HEK293 (cell line): ENCODE measurements at regions of chr21 and their contacts with region 1.

Region 1: GRCh38 chr21:33479679-33480480 is at the start of gene TMEM50B:
- H3K4me3 ChIP-seq: peak within 1 kb of the TSS; percentile 59
- H3K27ac ChIP-seq: peak within 1 kb of the TSS; percentile 87
- H3K4me1 ChIP-seq: peaks cover 2% of the 10 kb centered on the region; the same call in 1 of the 2 replicates
- CTCF ChIP-seq: peak; percentile 98

Region 2: DNA sequence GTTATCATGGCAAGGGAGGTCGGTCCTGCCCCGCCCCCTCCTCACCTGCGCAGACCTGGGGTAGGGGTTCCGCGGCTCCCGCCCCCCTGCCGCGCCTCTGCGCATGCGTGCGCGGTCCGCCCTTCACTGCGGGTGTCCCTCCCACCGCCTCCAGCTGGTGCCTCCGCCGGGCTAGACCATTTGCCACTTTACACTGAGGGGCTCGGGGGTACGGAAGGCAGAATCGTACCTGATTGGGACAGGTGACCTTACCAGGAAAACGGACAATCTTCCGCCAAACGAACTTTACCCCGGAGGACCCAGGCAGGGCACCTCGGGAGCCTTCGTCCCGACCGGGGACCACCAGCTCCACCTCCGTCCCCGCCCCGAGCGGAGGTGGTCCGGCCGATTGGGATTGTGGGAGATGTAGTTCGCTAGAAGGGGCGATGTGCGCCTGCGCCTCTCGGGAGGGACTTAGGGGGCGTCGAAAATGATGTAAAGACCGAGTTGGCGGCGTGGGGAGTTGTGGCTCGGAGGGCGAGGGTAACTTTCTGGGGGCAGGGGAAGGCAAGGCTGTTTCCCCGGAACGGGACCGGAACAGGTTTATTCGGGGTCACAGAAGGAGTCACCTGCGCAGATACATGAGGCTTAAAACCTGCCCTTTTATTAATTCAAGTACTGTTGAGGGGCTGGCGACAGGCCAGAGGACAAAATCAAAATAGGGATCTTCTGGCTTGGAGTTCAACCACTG is 11.7 kb after region 1 on chr21 and contains the start of gene DNAJC28:
- CTCF ChIA-PET with region 1: interaction called, 16 read pairs
- POLR2A ChIA-PET with region 1: interaction called, 154 read pairs
- H3K4me3 ChIP-seq: peak within 1 kb of the TSS; percentile 84
- H3K27ac ChIP-seq: peak within 1 kb of the TSS; percentile 38; the same call in 1 of the 2 replicates
- H3K4me1 ChIP-seq: no peaks in the 10 kb centered on the region; the same call in 1 of the 2 replicates
- CTCF ChIP-seq: no peak

Region 3: GRCh38 chr21:33542640-33543504 is 63.0 kb after region 1 on chr21 and contains the start of gene SON:
- CTCF ChIA-PET with region 1: interaction called, 3 read pairs
- POLR2A ChIA-PET with region 1: interaction called, 20 read pairs
- H3K4me3 ChIP-seq: peak within 1 kb of the TSS; percentile 98
- H3K27ac ChIP-seq: peak within 1 kb of the TSS; percentile 93
- H3K4me1 ChIP-seq: peaks cover 12% of the 10 kb centered on the region
- CTCF ChIP-seq: 0 out of 2 replicates have a peak, but pooled peaks have one; percentile 48